ENCODE measurements at regions of chr17 and their contacts with region 1.

Region 1: DNA sequence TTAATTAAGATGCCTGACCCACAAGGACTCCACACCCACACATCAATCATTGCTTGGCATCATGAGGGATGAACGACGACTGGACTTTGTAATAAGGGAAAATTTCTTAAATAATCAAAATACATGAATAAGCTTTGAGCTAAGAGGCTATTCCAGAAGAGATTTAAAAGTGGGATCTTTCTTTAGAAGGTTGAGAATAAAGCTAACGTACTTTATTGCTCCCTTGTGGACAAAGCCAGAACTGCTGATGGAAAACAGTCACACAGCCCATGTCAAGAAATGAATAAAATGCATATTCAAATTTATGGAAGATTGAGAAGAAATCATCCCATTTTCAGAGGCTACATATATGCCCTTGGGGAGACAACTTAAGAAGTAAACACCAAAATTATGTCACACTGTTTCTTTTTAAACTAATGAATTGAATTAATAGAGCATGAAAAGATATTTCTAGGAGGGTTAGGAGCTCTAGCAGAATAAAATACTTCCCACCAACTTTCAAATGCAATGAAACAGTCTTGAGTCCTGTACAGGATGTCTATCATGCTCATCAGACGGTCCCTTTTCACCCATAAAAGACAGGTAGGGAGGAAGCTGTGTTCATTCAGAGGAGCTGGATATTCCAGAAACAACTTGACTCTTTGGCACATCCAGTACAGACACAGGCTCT is 60.2 kb upstream of the PHOSPHO1 start:
- DNase-seq: peak in 7 of 35 experiments; percentile 4 to 49 (median 8)
- ATAC-seq: no peak
- H3K4me3 ChIP-seq: no peak overlapping the region
- H3K4me3 Mint-ChIP-seq: no peak overlapping the region
- H3K27ac ChIP-seq: no peak overlapping the region
- H3K27ac Mint-ChIP-seq: no peak overlapping the region
- H3K4me1 ChIP-seq: no peaks in the 10 kb centered on the region
- H3K4me1 Mint-ChIP-seq: peaks cover 0 to 6% (median 2%) of the 10 kb centered on the region in 3 donors
- H3K27me3 ChIP-seq: peaks cover 0 to 3% of the 10 kb centered on the region in 2 experiments
- H3K27me3 Mint-ChIP-seq: no peaks in the 10 kb centered on the region

Region 2: GRCh38 chr17:49180303-49180702 is 110.5 kb before region 1 on chr17:
- CTCF ChIA-PET with region 1: interaction called, 8 to 10 read pairs
- POLR2A ChIA-PET with region 1: no interaction called
- DNase-seq: peak in 33 of 35 experiments; percentile 5 to 83 (median 53)
- ATAC-seq: peak in 2 of 4 experiments; percentile 33 to 61
- H3K4me3 ChIP-seq: no peak overlapping the region
- H3K4me3 Mint-ChIP-seq: peak overlapping the region in 1 of 3 donors; percentile 31
- H3K27ac ChIP-seq: no peak overlapping the region
- H3K27ac Mint-ChIP-seq: no peak overlapping the region
- H3K4me1 ChIP-seq: peaks cover 0 to 6% of the 10 kb centered on the region in 2 experiments
- H3K4me1 Mint-ChIP-seq: peaks cover 0 to 5% (median 4%) of the 10 kb centered on the region in 3 donors
- H3K27me3 ChIP-seq: peaks cover 0 to 10% of the 10 kb centered on the region in 2 experiments
- H3K27me3 Mint-ChIP-seq: peaks cover 1 to 4% of the 10 kb centered on the region in 2 donors

Region 3: GRCh38 chr17:50043290-50044148 is 752.7 kb after region 1 on chr17:
- CTCF ChIA-PET with region 1: no interaction called
- POLR2A ChIA-PET with region 1: interaction called in 1 of 2 experiments, 10 read pairs
- DNase-seq: no peak
- ATAC-seq: no peak
- H3K4me3 ChIP-seq: no peak overlapping the region
- H3K4me3 Mint-ChIP-seq: no peak overlapping the region
- H3K27ac ChIP-seq: no peak overlapping the region
- H3K27ac Mint-ChIP-seq: no peak overlapping the region
- H3K4me1 ChIP-seq: no peaks in the 10 kb centered on the region
- H3K4me1 Mint-ChIP-seq: no peaks in the 10 kb centered on the region
- H3K27me3 ChIP-seq: peaks cover 0 to 41% of the 10 kb centered on the region in 2 experiments
- H3K27me3 Mint-ChIP-seq: peaks cover 5 to 27% of the 10 kb centered on the region in 2 donors